ENCODE measurements at regions of chr2 and their contacts with region 1.

Region 1: GRCh38 chr2:17190527-17190926 is 327.7 kb downstream of the RAD51AP2 start:
- DNase-seq: no peak
- H3K4me3 ChIP-seq: no peak overlapping the region
- H3K27ac ChIP-seq: no peak overlapping the region
- H3K4me1 ChIP-seq: no peaks in the 10 kb centered on the region
- CTCF ChIP-seq: no peak

Region 2: DNA sequence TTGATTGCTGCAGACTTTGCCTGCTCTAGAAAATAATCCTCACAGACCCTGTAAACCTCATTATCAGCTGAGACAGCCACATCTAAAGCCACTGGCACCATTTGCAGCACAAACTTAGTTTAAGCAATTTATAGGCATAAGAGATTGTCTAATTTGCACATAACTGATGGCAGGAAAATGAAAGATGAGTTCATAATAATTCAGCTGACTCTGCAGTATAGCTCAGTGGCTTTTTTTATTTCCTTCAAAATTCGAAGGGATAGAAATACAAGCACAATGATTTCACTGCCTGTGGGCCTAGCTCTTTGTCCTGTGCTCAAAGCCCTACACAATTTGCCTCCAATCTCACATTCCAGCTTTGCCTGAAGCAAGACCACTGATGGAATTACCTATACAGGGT is 13.4 kb before region 1 on chr2:
- CTCF ChIA-PET with region 1: interaction called, 3 read pairs
- POLR2A ChIA-PET with region 1: interaction called, 13 read pairs
- intact Hi-C with region 1: no loop called
- DNase-seq: no peak
- H3K4me3 ChIP-seq: no peak overlapping the region
- H3K27ac ChIP-seq: no peak overlapping the region
- H3K4me1 ChIP-seq: no peaks in the 10 kb centered on the region
- CTCF ChIP-seq: no peak

Region 3: GRCh38 chr2:17226941-17227490 is 36.5 kb after region 1 on chr2:
- CTCF ChIA-PET with region 1: no interaction called
- POLR2A ChIA-PET with region 1: no interaction called
- intact Hi-C with region 1: no loop called
- DNase-seq: no peak
- H3K4me3 ChIP-seq: no peak overlapping the region
- H3K27ac ChIP-seq: no peak overlapping the region
- H3K4me1 ChIP-seq: no peaks in the 10 kb centered on the region
- CTCF ChIP-seq: no peak

Measured in OCI-LY7 (cell line).